ENCODE measurements at regions of chr2 and their contacts with region 1.

Region 1: GRCh38 chr2:158745044-158745865 is 49.9 kb upstream of the DAPL1 start:
- DNase-seq: peak; percentile 64
- ATAC-seq: peak; percentile 90
- H3K4me3 ChIP-seq: no peak overlapping the region
- H3K27ac ChIP-seq: no peak overlapping the region
- H3K4me1 ChIP-seq: peaks cover 30% of the 10 kb centered on the region
- H3K27me3 ChIP-seq: peaks cover under 1 to 31% of the 10 kb centered on the region in 2 experiments; a peak in 4 of 5 replicates
- CTCF ChIP-seq: peak; percentile 80
- EP300 ChIP-seq: no peak
- POLR2A ChIP-seq: no peak
- RAD21 ChIP-seq: peak; percentile 57

Region 2: GRCh38 chr2:158024288-158024898 is 720.9 kb before region 1 on chr2:
- CTCF ChIA-PET with region 1: interaction called, 12 read pairs
- POLR2A ChIA-PET with region 1: no interaction called
- in situ Hi-C with region 1: no loop called
- intact Hi-C with region 1: loop called (anchors 1 kb)
- DNase-seq: peak; percentile 29
- ATAC-seq: peak; percentile 77
- H3K4me3 ChIP-seq: no peak overlapping the region
- H3K27ac ChIP-seq: no peak overlapping the region
- H3K4me1 ChIP-seq: peaks cover 22% of the 10 kb centered on the region
- H3K27me3 ChIP-seq: 0 out of 5 replicates have a peak, but pooled peaks cover 1 to 6% of the 10 kb centered on the region in 2 experiments
- CTCF ChIP-seq: peak; percentile 86
- EP300 ChIP-seq: no peak
- POLR2A ChIP-seq: no peak
- RAD21 ChIP-seq: peak; percentile 76

Region 3: GRCh38 chr2:158034199-158034866 is 710.9 kb before region 1 on chr2:
- CTCF ChIA-PET with region 1: interaction called, 6 read pairs
- POLR2A ChIA-PET with region 1: no interaction called
- in situ Hi-C with region 1: loop called (anchors 5 kb)
- intact Hi-C with region 1: loop called (anchors 2 kb)
- DNase-seq: peak; percentile 74
- ATAC-seq: peak; percentile 96
- H3K4me3 ChIP-seq: no peak overlapping the region
- H3K27ac ChIP-seq: no peak overlapping the region
- H3K4me1 ChIP-seq: no peaks in the 10 kb centered on the region
- H3K27me3 ChIP-seq: peaks cover 0 to 17% of the 10 kb centered on the region in 2 experiments; a peak in 2 of 5 replicates
- CTCF ChIP-seq: peak; percentile 89
- EP300 ChIP-seq: no peak
- POLR2A ChIP-seq: no peak
- RAD21 ChIP-seq: peak; percentile 70

Region 4: DNA sequence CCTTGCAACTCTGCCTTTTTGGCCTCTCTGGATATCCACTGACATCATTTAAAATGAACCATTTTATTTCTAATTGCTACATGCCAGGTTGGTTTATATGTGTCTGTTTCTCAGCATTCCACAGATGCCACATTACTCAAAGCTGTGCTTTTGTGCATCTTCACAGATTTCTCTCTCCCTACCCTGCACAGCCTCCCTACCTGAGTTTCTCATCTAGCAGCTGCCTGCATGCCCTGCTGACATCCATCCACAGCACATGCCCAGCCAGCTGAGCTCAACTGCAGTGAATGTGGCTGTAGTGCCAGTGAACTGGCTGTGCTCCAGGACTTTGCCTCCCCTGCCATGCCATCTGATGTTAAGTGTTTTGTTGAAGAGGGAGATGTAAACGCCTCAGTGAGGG is 244.0 kb before region 1 on chr2:
- CTCF ChIA-PET with region 1: no interaction called
- POLR2A ChIA-PET with region 1: no interaction called
- in situ Hi-C with region 1: no loop called
- intact Hi-C with region 1: no loop called
- DNase-seq: no peak
- ATAC-seq: no peak
- H3K4me3 ChIP-seq: no peak overlapping the region
- H3K27ac ChIP-seq: no peak overlapping the region
- H3K4me1 ChIP-seq: peaks cover 82% of the 10 kb centered on the region
- H3K27me3 ChIP-seq: no peaks in the 10 kb centered on the region
- CTCF ChIP-seq: no peak
- EP300 ChIP-seq: no peak
- POLR2A ChIP-seq: no peak
- RAD21 ChIP-seq: no peak

Region 5: GRCh38 chr2:158692372-158693103 is 52.7 kb before region 1 on chr2:
- CTCF ChIA-PET with region 1: no interaction called
- POLR2A ChIA-PET with region 1: no interaction called
- in situ Hi-C with region 1: no loop called
- intact Hi-C with region 1: loop called (anchors 2 kb)
- DNase-seq: peak; percentile 21
- ATAC-seq: peak; percentile 37
- H3K4me3 ChIP-seq: no peak overlapping the region
- H3K27ac ChIP-seq: no peak overlapping the region
- H3K4me1 ChIP-seq: peaks cover 10% of the 10 kb centered on the region
- H3K27me3 ChIP-seq: peaks cover 0 to 3% of the 10 kb centered on the region in 2 experiments; a peak in 2 of 5 replicates
- CTCF ChIP-seq: no peak
- EP300 ChIP-seq: no peak
- POLR2A ChIP-seq: no peak
- RAD21 ChIP-seq: no peak

Measured in HepG2 (cell line).